ENCODE measurements at regions of chr9 and their contacts with region 1.

Region 1: DNA sequence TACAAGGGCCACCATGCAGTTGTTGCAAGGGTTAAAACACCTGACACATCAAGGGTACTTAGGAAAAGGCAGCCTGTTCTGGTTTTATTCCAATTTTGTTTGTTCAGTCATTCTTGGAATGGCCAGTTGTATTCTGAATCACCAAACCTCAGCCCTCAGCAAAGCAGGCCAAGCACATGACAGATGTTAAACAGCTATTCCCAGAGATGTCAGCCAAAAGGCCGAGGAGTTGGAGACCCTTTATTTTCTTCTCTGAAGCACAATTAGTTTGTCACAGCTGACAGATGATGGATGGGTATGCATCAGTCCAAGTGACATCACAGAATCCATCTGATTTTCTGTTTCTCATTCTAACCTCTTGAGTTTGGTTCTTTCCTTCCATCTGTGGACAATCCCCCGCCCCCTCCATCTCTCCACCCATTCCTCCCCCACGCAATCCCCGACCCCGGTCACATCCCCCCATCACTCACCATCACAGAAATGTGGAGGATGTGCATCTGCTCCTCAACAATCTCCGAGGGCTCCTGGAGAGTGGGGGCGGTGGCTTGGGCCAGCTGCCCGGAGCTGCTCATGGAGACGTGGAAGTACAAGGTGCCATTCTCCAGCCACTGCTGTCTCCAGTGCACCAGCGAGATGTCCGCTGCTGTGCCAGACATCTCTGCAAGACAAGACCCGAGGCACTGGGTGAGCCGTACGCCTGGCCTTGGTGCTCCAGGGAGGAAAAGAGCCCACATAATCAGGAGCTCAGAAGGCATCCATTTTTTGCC is 123.8 kb downstream of the ASTN2 start:
- DNase-seq: peak; percentile 4
- ATAC-seq: no peak
- H3K4me3 ChIP-seq: no peak overlapping the region
- H3K27ac ChIP-seq: no peak overlapping the region
- H3K4me1 ChIP-seq: no peaks in the 10 kb centered on the region
- H3K27me3 ChIP-seq: no peaks in the 10 kb centered on the region
- CTCF ChIP-seq: no peak
- POLR2A ChIP-seq: no peak
- RAD21 ChIP-seq: no peak

Region 2: DNA sequence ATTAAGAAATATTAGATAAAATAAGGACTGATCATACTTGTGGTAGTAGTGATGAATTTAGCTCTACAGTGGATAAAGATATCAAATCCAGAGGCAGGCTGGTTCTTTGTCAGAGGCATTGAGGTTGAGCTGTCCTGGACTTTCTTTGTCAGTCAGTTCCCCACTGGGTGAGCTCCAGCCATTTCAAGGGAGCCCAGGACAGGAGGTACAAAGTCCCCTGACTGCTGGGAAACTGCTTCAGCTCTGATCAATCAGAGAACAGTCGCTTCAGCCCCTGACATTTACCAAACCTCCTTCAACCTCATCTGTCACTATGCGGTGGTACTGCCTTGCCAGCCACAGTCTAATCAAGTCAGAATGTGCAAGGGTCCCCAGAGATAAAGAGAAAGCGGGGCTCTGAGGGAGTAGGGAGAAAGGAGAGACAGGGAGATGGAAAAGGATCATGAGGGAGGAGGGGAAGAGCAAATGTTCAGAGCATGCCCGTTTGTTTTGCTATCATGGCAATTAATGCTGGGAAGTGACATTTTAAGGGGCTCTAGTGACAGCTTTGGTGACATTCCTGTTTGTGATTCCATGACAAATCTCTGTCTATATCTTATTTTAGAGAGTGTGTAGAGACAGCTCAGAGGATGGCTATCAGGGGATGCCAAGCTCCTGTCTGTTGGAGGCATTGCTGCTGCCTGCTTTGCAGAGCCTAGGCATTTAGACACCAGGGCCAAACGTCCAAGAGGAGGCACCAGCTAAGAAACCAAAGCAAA is 99.4 kb before region 1 on chr9:
- CTCF ChIA-PET with region 1: no interaction called
- POLR2A ChIA-PET with region 1: no interaction called
- dilution Hi-C with region 1: no loop called
- in situ Hi-C with region 1: no loop called
- intact Hi-C with region 1: no loop called
- DNase-seq: no peak
- ATAC-seq: no peak
- H3K4me3 ChIP-seq: no peak overlapping the region
- H3K27ac ChIP-seq: no peak overlapping the region
- H3K4me1 ChIP-seq: no peaks in the 10 kb centered on the region
- H3K27me3 ChIP-seq: no peaks in the 10 kb centered on the region
- CTCF ChIP-seq: no peak
- POLR2A ChIP-seq: no peak
- RAD21 ChIP-seq: no peak

Region 3: DNA sequence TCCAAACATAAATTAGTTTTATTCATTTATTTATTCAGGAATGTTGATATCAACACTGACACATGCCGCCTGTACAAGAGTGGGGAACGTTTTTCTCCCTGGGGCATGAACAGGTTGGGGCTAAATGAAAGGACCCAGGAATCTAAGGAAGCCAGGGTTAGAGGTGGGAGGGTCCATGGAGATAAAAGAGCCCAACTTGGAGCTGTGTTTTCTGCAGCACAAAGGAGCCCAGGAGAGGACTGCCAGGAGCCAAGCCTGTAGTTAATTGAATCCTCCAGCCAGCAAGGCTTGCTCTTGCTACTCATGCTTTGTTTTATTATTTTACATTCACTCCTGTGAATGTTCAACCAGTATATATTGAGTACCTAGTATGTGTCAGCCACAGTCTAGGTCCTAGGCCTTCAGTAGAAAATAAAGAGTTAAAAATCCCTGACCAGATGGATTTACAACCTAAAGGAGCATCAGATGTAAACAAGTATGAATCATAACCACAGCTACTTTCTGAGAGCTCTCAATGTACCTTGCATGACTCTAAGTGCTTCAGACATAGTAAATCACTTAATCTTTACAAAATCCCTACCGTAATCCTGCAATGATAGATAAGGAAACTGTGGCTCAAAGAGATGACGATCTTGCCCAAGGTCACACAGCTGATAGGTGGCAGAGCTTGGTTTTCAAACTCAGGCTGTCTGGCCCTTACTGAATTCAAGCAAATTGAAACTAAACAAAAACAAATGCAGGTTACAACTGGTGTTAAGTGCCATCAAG is 54.0 kb after region 1 on chr9:
- CTCF ChIA-PET with region 1: no interaction called
- POLR2A ChIA-PET with region 1: no interaction called
- dilution Hi-C with region 1: no loop called
- in situ Hi-C with region 1: no loop called
- intact Hi-C with region 1: loop called (anchors 10 kb)
- DNase-seq: no peak
- ATAC-seq: no peak
- H3K4me3 ChIP-seq: no peak overlapping the region
- H3K27ac ChIP-seq: no peak overlapping the region
- H3K4me1 ChIP-seq: no peaks in the 10 kb centered on the region
- H3K27me3 ChIP-seq: no peaks in the 10 kb centered on the region
- CTCF ChIP-seq: no peak
- POLR2A ChIP-seq: no peak
- RAD21 ChIP-seq: no peak

Measured in IMR-90 (cell line).